ENCODE measurements at regions of chr12 and their contacts with region 1.

Region 1: GRCh38 chr12:15584366-15585041 is 204.7 kb downstream of the EPS8 start:
- DNase-seq: peak in 21 of 35 experiments; percentile 8 to 82 (median 25)
- ATAC-seq: peak; percentile 50 to 66 (median 55)
- H3K4me3 ChIP-seq: no peak overlapping the region
- H3K4me3 Mint-ChIP-seq: no peak overlapping the region
- H3K27ac ChIP-seq: no peak overlapping the region
- H3K27ac Mint-ChIP-seq: peak overlapping the region in 1 of 2 donors; percentile 28
- H3K4me1 ChIP-seq: no peaks in the 10 kb centered on the region
- H3K4me1 Mint-ChIP-seq: peaks cover 12 to 18% (median 14%) of the 10 kb centered on the region in 3 donors
- H3K27me3 ChIP-seq: no peaks in the 10 kb centered on the region
- H3K27me3 Mint-ChIP-seq: no peaks in the 10 kb centered on the region

Region 2: GRCh38 chr12:14665354-14666348 is 918.9 kb before region 1 on chr12:
- CTCF ChIA-PET with region 1: no interaction called
- POLR2A ChIA-PET with region 1: no interaction called
- DNase-seq: no peak
- ATAC-seq: no peak
- H3K4me3 ChIP-seq: no peak overlapping the region
- H3K4me3 Mint-ChIP-seq: no peak overlapping the region
- H3K27ac ChIP-seq: no peak overlapping the region
- H3K27ac Mint-ChIP-seq: no peak overlapping the region
- H3K4me1 ChIP-seq: no peaks in the 10 kb centered on the region
- H3K4me1 Mint-ChIP-seq: peaks cover 6 to 13% (median 6%) of the 10 kb centered on the region in 3 donors
- H3K27me3 ChIP-seq: no peaks in the 10 kb centered on the region
- H3K27me3 Mint-ChIP-seq: peaks cover 2 to 6% of the 10 kb centered on the region in 2 donors

Region 3: GRCh38 chr12:15453613-15454012 is 130.9 kb before region 1 on chr12:
- CTCF ChIA-PET with region 1: no interaction called
- POLR2A ChIA-PET with region 1: no interaction called
- DNase-seq: no peak
- ATAC-seq: no peak
- H3K4me3 ChIP-seq: no peak overlapping the region
- H3K4me3 Mint-ChIP-seq: no peak overlapping the region
- H3K27ac ChIP-seq: no peak overlapping the region
- H3K27ac Mint-ChIP-seq: no peak overlapping the region
- H3K4me1 ChIP-seq: no peaks in the 10 kb centered on the region
- H3K4me1 Mint-ChIP-seq: peaks cover 0 to 2% (median 2%) of the 10 kb centered on the region in 3 donors
- H3K27me3 ChIP-seq: no peaks in the 10 kb centered on the region
- H3K27me3 Mint-ChIP-seq: peaks cover 0 to 3% of the 10 kb centered on the region in 2 donors

Region 4: DNA sequence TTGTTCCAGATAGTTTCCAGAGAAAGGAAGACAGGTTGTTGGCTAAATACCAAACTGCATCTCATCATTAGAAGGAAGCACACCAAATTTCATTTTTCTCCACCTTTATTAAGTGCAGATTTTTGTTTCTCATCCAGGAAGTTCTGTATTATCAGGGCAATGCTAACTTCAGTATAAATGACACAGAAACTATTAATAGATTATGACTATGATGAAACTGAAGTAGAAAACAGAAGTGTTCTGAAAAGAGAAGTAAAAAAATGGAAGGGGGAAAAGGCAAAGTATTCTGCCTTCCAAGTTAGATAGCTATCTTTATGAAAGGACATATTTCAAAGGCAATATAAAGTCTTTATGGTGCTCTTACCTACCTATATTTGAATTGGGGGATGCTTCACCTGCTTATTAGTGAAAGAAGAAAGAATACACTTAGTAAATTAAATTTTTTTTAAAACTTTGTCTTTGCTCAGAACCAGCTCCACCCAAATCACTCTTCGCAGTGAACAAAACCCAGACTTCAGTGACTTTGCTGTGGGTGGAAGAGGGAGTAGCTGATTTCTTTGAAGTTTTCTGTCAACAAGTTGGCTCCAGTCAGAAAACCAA is 38.3 kb before region 1 on chr12:
- CTCF ChIA-PET with region 1: interaction called, 4 to 16 read pairs
- POLR2A ChIA-PET with region 1: interaction called in 1 of 2 experiments, 4 read pairs
- DNase-seq: peak in 29 of 35 experiments; percentile 15 to 73 (median 38)
- ATAC-seq: peak; percentile 95 to 99 (median 96)
- H3K4me3 ChIP-seq: no peak overlapping the region
- H3K4me3 Mint-ChIP-seq: peak overlapping the region; percentile 43 to 63 (median 52)
- H3K27ac ChIP-seq: peak overlapping the region; percentile 85
- H3K27ac Mint-ChIP-seq: peak overlapping the region; percentile 96 to 97
- H3K4me1 ChIP-seq: peaks cover 18 to 27% of the 10 kb centered on the region in 2 experiments
- H3K4me1 Mint-ChIP-seq: peaks cover 67 to 76% (median 67%) of the 10 kb centered on the region in 3 donors
- H3K27me3 ChIP-seq: no peaks in the 10 kb centered on the region
- H3K27me3 Mint-ChIP-seq: no peaks in the 10 kb centered on the region

Region 5: GRCh38 chr12:15563663-15564062 is 20.8 kb before region 1 on chr12:
- CTCF ChIA-PET with region 1: interaction called, 11 to 17 read pairs
- POLR2A ChIA-PET with region 1: no interaction called
- DNase-seq: peak in 4 of 35 experiments; percentile 11 to 59 (median 16)
- ATAC-seq: peak; percentile 75 to 83 (median 78)
- H3K4me3 ChIP-seq: peak overlapping the region; percentile 27 to 40
- H3K4me3 Mint-ChIP-seq: peak overlapping the region; percentile 58 to 80 (median 75)
- H3K27ac ChIP-seq: peak overlapping the region; percentile 77
- H3K27ac Mint-ChIP-seq: peak overlapping the region; percentile 93 to 98
- H3K4me1 ChIP-seq: peaks cover 4 to 40% of the 10 kb centered on the region in 2 experiments
- H3K4me1 Mint-ChIP-seq: peaks cover 53 to 75% (median 73%) of the 10 kb centered on the region in 3 donors
- H3K27me3 ChIP-seq: no peaks in the 10 kb centered on the region
- H3K27me3 Mint-ChIP-seq: peaks cover 0 to 2% of the 10 kb centered on the region in 2 donors